ENCODE measurements at regions of chr16 and their contacts with region 1.

Region 1: GRCh38 chr16:67480833-67481560 is at the start of gene ATP6V0D1:
- DNase-seq: peak; percentile 97 to 100 (median 99)
- ATAC-seq: peak; percentile 94
- H3K4me3 ChIP-seq: peak within 1 kb of the TSS; percentile 92
- H3K4me3 Mint-ChIP-seq: peak within 1 kb of the TSS; percentile 95 to 100 (median 99)
- H3K27ac ChIP-seq: peak within 1 kb of the TSS; percentile 99
- H3K27ac Mint-ChIP-seq: peak within 1 kb of the TSS; percentile 95 to 99 (median 98)
- H3K4me1 ChIP-seq: peaks cover 15 to 25% of the 10 kb centered on the region in 2 donors
- H3K4me1 Mint-ChIP-seq: peaks cover 20 to 60% (median 37%) of the 10 kb centered on the region in 7 donors
- H3K27me3 ChIP-seq: no peaks in the 10 kb centered on the region
- H3K27me3 Mint-ChIP-seq: no peaks in the 10 kb centered on the region
- total RNA-seq, gene ATP6V0D1: 35.8 to 104 (median 54.7) TPM

Region 2: GRCh38 chr16:67191995-67192681 is 288.9 kb before region 1 on chr16 and contains the start of gene E2F4:
- CTCF ChIA-PET with region 1: no interaction called
- POLR2A ChIA-PET with region 1: no interaction called
- intact Hi-C with region 1: loop called in 1 of 2 experiments (anchors 1 kb)
- DNase-seq: peak; percentile 72 to 88 (median 80)
- ATAC-seq: peak; percentile 97
- H3K4me3 ChIP-seq: peak within 1 kb of the TSS; percentile 72
- H3K4me3 Mint-ChIP-seq: peak within 1 kb of the TSS; percentile 83 to 93 (median 92)
- H3K27ac ChIP-seq: peak within 1 kb of the TSS; percentile 94
- H3K27ac Mint-ChIP-seq: peak within 1 kb of the TSS; percentile 53 to 95 (median 91)
- H3K4me1 ChIP-seq: peaks cover 22 to 26% of the 10 kb centered on the region in 2 donors
- H3K4me1 Mint-ChIP-seq: peaks cover 22 to 50% (median 46%) of the 10 kb centered on the region in 7 donors
- H3K27me3 ChIP-seq: no peaks in the 10 kb centered on the region
- H3K27me3 Mint-ChIP-seq: peaks cover 0 to 3% (median 0%) of the 10 kb centered on the region in 5 donors
- total RNA-seq, gene E2F4: 67.1 to 133 (median 73.0) TPM

Region 3: GRCh38 chr16:67279296-67280089 is 201.5 kb before region 1 on chr16 and contains the start of gene PLEKHG4:
- CTCF ChIA-PET with region 1: no interaction called
- POLR2A ChIA-PET with region 1: interaction called, 4 read pairs
- intact Hi-C with region 1: loop called in 1 of 2 experiments (anchors 2 kb)
- DNase-seq: peak in 8 of 9 donors; percentile 61 to 79 (median 73)
- ATAC-seq: peak; percentile 98
- H3K4me3 ChIP-seq: peak within 1 kb of the TSS; percentile 70
- H3K4me3 Mint-ChIP-seq: peak within 1 kb of the TSS; percentile 74 to 90 (median 83)
- H3K27ac ChIP-seq: peak within 1 kb of the TSS; percentile 72
- H3K27ac Mint-ChIP-seq: peak within 1 kb of the TSS; percentile 62 to 93 (median 78)
- H3K4me1 ChIP-seq: peaks cover 9 to 27% of the 10 kb centered on the region in 2 donors
- H3K4me1 Mint-ChIP-seq: peaks cover 6 to 26% (median 21%) of the 10 kb centered on the region in 7 donors
- H3K27me3 ChIP-seq: no peaks in the 10 kb centered on the region
- H3K27me3 Mint-ChIP-seq: no peaks in the 10 kb centered on the region
- total RNA-seq, gene PLEKHG4: 18.9 to 32.3 (median 26.1) TPM

Region 4: DNA sequence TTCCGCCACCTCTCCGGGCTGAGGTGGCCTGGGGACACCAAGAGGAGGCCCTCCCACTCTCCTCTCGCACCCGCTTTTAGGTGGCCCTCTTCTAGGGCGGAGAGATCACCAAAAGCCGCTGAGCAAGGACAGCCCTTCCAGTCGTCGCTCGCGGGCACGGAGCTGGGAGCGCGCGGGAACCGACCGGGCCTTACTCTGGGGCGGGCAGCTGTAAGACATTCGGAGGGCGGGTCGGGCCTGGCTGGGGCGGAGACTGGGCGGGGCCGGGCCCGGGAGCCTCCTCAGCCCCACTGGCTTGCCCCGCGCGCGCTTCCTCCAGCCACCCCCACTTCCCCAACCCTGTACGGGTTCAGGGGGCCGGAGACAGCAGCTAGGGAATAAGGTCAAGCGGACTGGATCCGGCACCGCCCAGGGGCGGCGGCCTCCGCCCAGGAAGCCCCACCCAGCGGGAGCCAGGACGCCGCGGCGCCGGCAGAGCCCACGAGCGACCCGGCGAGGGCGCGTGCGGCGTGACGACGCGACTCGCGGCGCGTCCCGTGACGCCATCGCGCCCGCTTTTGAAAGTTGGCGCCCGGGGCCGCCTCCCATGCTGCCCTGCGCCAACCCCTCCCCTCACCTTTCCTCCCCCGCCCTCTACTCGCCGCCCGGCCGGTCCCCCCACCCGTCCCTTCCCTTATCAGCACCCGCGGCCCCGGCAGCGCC is 81.0 kb after region 1 on chr16:
- CTCF ChIA-PET with region 1: interaction called, 4 read pairs
- POLR2A ChIA-PET with region 1: interaction called, 11 read pairs
- intact Hi-C with region 1: loop called (anchors 1 kb)
- DNase-seq: peak; percentile 93 to 98 (median 96)
- ATAC-seq: peak; percentile 86
- H3K4me3 ChIP-seq: peak overlapping the region; percentile 72
- H3K4me3 Mint-ChIP-seq: peak overlapping the region; percentile 85 to 93 (median 90)
- H3K27ac ChIP-seq: peak overlapping the region; percentile 98
- H3K27ac Mint-ChIP-seq: peak overlapping the region; percentile 90 to 99 (median 96)
- H3K4me1 ChIP-seq: peaks cover 30 to 36% of the 10 kb centered on the region in 2 donors
- H3K4me1 Mint-ChIP-seq: peaks cover 28 to 64% (median 46%) of the 10 kb centered on the region in 7 donors
- H3K27me3 ChIP-seq: no peaks in the 10 kb centered on the region
- H3K27me3 Mint-ChIP-seq: no peaks in the 10 kb centered on the region

Region 5: GRCh38 chr16:67719048-67719777 is 238.2 kb after region 1 on chr16 and contains the start of gene GFOD2:
- CTCF ChIA-PET with region 1: no interaction called
- POLR2A ChIA-PET with region 1: no interaction called
- intact Hi-C with region 1: loop called (anchors 2 kb)
- DNase-seq: peak; percentile 94 to 100 (median 96)
- ATAC-seq: peak; percentile 96
- H3K4me3 ChIP-seq: peak within 1 kb of the TSS; percentile 95
- H3K4me3 Mint-ChIP-seq: peak within 1 kb of the TSS; percentile 90 to 99 (median 94)
- H3K27ac ChIP-seq: peak within 1 kb of the TSS; percentile 88
- H3K27ac Mint-ChIP-seq: peak within 1 kb of the TSS; percentile 91 to 99 (median 98)
- H3K4me1 ChIP-seq: peaks cover 15 to 16% of the 10 kb centered on the region in 2 donors
- H3K4me1 Mint-ChIP-seq: peaks cover 19 to 51% (median 39%) of the 10 kb centered on the region in 7 donors
- H3K27me3 ChIP-seq: no peaks in the 10 kb centered on the region
- H3K27me3 Mint-ChIP-seq: no peaks in the 10 kb centered on the region
- total RNA-seq, gene GFOD2: 6.3 to 13.4 (median 11.4) TPM

Region 6: DNA sequence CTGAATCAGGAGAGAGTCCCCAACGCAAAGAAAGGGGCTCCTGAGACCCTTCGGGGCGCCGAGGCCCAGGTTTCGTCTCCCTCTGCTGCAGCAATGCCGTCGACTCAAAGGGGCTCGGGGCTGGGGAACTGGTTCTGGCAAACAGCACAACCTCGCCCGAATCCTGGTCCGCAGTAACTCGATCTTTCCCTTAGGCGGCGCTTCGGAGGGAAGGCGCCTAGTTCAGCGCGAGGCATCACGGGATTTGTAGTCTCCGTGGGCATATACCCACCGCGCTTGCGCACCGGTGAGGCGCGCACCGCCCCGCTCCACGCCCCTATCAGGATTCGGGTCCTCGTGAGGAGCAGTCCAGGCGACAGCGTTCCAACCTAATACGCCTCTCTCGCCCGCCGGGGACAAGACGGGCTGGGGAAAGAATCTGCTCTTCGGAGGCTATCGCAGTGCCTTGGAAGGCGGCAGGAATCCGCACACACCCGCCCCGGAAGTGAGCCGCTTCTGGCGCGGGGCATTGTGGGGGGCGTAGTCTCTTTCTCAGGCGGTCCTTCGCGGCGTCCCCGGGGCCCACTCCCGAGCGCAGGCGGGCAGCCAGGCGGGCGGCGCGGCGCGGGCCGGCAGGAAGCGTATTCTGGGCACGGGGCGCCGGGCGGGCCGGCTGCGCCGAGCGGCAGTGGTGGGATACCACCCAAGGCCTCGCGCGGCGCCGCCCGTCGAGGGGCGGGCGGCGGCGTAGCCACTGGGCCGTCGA is 360.9 kb after region 1 on chr16 and contains the start of gene THAP11:
- CTCF ChIA-PET with region 1: no interaction called
- POLR2A ChIA-PET with region 1: no interaction called
- intact Hi-C with region 1: loop called (anchors 1 kb)
- DNase-seq: peak; percentile 91 to 99 (median 96)
- ATAC-seq: peak; percentile 76
- H3K4me3 ChIP-seq: peak within 1 kb of the TSS; percentile 100
- H3K4me3 Mint-ChIP-seq: peak within 1 kb of the TSS; percentile 94 to 97 (median 96)
- H3K27ac ChIP-seq: peak within 1 kb of the TSS; percentile 99
- H3K27ac Mint-ChIP-seq: peak within 1 kb of the TSS; percentile 94 to 98 (median 97)
- H3K4me1 ChIP-seq: peaks cover 34 to 36% of the 10 kb centered on the region in 2 donors
- H3K4me1 Mint-ChIP-seq: peaks cover 18 to 41% (median 36%) of the 10 kb centered on the region in 7 donors
- H3K27me3 ChIP-seq: no peaks in the 10 kb centered on the region
- H3K27me3 Mint-ChIP-seq: no peaks in the 10 kb centered on the region
- total RNA-seq, gene THAP11: 29.0 to 62.7 (median 44.6) TPM